ENCODE measurements at regions of chr17 and their contacts with region 1.

Region 1: GRCh38 chr17:77088455-77089123 is 52.2 kb upstream of the SEC14L1 start:
- DNase-seq: peak; percentile 85
- H3K4me3 ChIP-seq: peak overlapping the region; percentile 73 to 83
- H3K27ac ChIP-seq: peak overlapping the region; percentile 70 to 74
- H3K4me1 ChIP-seq: peaks cover 2% of the 10 kb centered on the region
- H3K27me3 ChIP-seq: no peaks in the 10 kb centered on the region
- CTCF ChIP-seq: peak in 3 of 4 experiments; percentile 58 to 77 (median 67)
- POLR2A ChIP-seq: peak; percentile 27

Region 2: DNA sequence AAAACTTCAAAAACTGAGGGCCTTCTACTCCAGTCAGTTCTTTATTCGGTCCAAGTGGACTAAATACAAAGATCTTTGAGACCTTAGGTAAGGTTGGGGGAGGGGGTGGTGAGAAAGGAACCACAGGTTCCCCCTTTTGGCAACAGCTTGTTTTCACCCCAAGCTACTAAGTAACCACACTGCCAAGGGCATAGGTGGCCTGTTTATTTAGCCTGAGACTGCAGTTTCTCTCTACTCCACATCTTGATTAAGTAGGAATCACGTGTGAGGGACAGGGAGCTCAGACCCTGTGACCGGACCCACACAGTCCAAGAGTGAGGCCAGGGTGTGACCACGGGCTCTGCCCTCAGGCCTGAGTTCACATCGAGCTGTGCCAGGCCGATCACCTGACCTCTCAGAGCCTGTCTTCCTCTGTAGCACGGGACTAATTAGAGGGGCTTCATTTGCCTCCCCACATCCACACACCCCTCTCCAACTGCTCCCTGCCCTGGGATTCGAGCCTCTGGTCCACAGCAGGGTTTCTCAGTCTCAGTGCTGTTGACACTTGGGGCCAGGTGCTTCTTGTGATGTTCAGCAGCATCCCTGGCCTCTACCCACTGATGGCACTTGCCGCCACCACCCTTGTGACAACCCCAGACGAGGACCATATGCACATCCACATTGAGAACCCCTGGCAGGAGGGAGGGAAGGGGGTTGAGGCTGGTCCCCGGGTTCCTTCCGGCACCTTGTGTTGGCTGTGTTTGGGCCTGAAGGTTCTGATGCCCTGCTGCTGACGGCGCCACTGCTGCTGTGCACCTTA is 520.8 kb before region 1 on chr17:
- intact Hi-C with region 1: no loop called
- DNase-seq: no peak
- H3K4me3 ChIP-seq: no peak overlapping the region
- H3K27ac ChIP-seq: no peak overlapping the region
- H3K4me1 ChIP-seq: no peaks in the 10 kb centered on the region
- H3K27me3 ChIP-seq: no peaks in the 10 kb centered on the region
- CTCF ChIP-seq: no peak
- POLR2A ChIP-seq: no peak

Region 3: DNA sequence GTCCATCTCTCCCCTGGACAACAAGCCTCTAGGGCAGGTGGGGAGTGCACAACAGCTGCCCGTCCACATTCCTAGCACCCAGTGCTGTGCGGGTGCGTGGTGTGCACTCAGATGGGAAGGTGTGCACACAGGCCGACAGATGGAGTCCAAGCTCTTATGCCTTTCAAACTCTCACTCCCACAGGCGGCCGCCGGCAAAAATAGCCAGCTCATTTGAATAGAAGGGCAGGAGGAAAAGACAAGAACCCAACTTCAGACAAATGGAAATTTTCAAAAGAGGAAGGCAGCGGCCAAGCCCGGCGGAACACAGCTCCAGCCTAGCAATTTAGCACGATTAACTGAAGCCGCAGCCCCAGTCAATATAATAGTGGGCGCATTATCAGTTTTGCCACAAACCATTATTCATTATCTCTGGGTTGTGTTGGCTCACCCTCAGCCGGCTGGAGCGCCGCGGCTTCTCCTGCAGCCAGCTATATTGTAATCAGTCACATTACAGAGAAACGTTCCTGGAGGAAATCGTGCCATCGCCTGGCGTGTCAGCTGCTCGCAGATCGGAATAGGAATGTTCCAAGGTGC is 51.7 kb before region 1 on chr17:
- intact Hi-C with region 1: no loop called
- DNase-seq: no peak
- H3K4me3 ChIP-seq: no peak overlapping the region
- H3K27ac ChIP-seq: no peak overlapping the region
- H3K4me1 ChIP-seq: no peaks in the 10 kb centered on the region
- H3K27me3 ChIP-seq: no peaks in the 10 kb centered on the region
- CTCF ChIP-seq: no peak
- POLR2A ChIP-seq: no peak

Region 4: DNA sequence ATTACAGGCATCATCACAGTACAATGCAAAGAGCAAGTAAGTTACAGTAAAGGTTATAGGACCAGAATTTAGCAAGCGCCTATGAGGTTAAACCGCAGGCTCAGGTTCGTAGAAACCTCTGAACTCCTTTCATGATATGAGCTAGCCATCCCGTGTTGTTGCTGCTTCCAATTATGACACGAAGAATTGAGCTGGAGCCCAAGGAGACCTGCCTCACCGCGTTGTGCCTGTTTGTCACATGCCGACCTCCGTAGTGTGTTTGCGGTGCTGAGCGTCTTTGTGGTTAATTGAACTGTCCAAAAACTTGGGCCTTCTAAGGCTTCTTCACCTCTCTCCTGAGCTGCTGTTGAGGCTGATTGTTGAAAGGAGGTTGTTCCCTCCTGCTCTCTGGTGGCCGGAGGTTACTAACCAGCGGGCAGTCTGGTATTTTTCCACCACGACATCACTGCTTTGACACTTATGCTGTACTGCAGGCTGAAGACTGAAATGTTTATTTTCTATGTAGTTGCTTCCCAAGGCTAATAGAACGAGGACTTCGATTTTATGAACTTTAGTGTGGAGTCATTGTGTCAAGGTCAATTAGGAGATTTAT is 119.7 kb after region 1 on chr17:
- intact Hi-C with region 1: loop called (anchors 5 kb)
- DNase-seq: peak; percentile 36
- H3K4me3 ChIP-seq: no peak overlapping the region
- H3K27ac ChIP-seq: peak overlapping the region in 1 of 2 donors; percentile 44
- H3K4me1 ChIP-seq: peaks cover 6% of the 10 kb centered on the region
- H3K27me3 ChIP-seq: no peaks in the 10 kb centered on the region
- CTCF ChIP-seq: peak in 2 of 4 experiments; percentile 49 to 52
- POLR2A ChIP-seq: no peak

Region 5: DNA sequence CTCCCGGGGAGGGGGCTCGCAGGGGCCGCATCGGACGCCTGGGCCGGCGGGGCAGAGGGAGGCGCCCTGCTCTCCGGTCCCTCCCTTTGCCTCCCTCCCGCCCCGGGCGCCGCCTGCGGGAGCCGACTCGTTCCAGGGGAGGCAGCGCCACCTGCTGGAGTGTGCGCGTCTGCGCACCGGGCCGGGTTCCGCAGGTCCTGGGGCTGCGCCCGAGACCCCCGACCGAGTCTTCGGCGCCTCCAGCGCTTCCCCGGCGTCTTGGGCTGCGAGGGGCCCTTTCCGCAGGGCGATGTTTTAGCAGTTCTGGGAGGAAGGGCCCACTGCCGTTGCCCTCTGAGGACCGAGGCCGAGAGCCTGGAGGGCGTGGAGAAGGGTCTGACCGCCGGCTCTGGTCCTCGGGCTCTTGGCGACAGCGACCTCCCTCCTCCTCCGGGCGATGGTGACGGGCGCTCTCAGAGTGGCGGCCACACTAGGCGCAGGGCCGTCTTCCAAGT is 158.5 kb after region 1 on chr17:
- intact Hi-C with region 1: loop called (anchors 2 kb)
- DNase-seq: peak; percentile 72
- H3K4me3 ChIP-seq: peak overlapping the region; percentile 50 to 51
- H3K27ac ChIP-seq: peak overlapping the region; percentile 16 to 51
- H3K4me1 ChIP-seq: peaks cover 3% of the 10 kb centered on the region
- H3K27me3 ChIP-seq: no peaks in the 10 kb centered on the region
- CTCF ChIP-seq: peak; percentile 96 to 99 (median 98)
- POLR2A ChIP-seq: no peak

Region 6: DNA sequence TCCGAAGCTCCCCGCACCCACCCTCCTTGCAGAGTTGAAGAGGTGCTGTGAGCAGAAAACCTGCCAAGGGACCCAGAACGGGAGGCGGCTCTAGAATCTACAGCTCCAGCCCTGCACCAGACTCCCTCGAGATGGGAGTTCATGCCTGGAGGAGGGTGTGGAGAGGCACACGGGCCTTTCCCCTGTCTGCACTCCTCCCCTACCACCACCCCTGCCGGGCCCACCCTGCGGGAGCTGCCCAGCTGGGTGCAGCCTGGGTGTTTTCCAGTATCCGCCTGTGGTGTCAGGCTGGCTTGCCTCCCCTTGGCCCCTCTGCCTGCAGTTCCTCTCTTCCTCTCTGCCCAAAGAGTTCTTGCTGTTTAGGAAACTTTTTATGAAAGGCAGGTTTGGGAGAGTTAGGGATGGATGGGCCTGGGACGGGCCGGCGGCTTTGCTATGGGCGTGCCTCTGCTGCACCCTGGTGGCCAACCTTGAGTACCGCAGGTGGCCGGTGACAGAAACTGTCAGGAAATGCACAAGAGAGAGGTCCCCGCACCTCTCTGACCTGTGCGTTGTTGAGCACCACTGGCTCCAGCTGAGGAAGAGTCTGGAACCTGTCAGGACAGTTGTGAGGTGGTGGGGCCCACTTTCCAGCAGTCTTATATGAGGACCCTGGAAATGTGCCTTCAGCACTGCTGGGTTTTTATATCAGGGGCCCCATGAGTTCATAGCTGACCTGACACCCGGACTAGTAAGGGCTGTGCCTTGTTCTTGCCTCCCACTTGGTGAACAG is 406.3 kb after region 1 on chr17:
- intact Hi-C with region 1: loop called (anchors 10 kb)
- DNase-seq: peak; percentile 79
- H3K4me3 ChIP-seq: no peak overlapping the region
- H3K27ac ChIP-seq: no peak overlapping the region
- H3K4me1 ChIP-seq: peaks cover 3% of the 10 kb centered on the region
- H3K27me3 ChIP-seq: no peaks in the 10 kb centered on the region
- CTCF ChIP-seq: peak; percentile 99
- POLR2A ChIP-seq: no peak